Activated CD4-positive, alpha-beta T cell treated with anti-CD3 and anti-CD28 coated beads, Interleukin-2, amount 10 ng/mL, durations not matched to agents 7 days and 5 days (primary cell): ENCODE measurements at regions of chr4 and their contacts with region 1.

Region 1: GRCh38 chr4:153095448-153096204 is 108.6 kb upstream of the TRIM2 start:
- DNase-seq: no peak
- H3K4me3 Mint-ChIP-seq: no peak overlapping the region
- H3K27ac Mint-ChIP-seq: no peak overlapping the region
- H3K4me1 Mint-ChIP-seq: peaks cover 3% of the 10 kb centered on the region
- H3K27me3 Mint-ChIP-seq: peaks cover 10% of the 10 kb centered on the region

Region 2: GRCh38 chr4:152910521-152910920 is 185.1 kb before region 1 on chr4:
- CTCF ChIA-PET with region 1: no interaction called
- POLR2A ChIA-PET with region 1: no interaction called
- DNase-seq: no peak
- H3K4me3 Mint-ChIP-seq: no peak overlapping the region
- H3K27ac Mint-ChIP-seq: no peak overlapping the region
- H3K4me1 Mint-ChIP-seq: no peaks in the 10 kb centered on the region
- H3K27me3 Mint-ChIP-seq: no peaks in the 10 kb centered on the region

Region 3: GRCh38 chr4:153083447-153083947 is 12.1 kb before region 1 on chr4:
- CTCF ChIA-PET with region 1: interaction called, 39 read pairs
- POLR2A ChIA-PET with region 1: no interaction called
- DNase-seq: peak; percentile 62
- H3K4me3 Mint-ChIP-seq: no peak overlapping the region
- H3K27ac Mint-ChIP-seq: no peak overlapping the region
- H3K4me1 Mint-ChIP-seq: peaks cover 53% of the 10 kb centered on the region
- H3K27me3 Mint-ChIP-seq: peaks cover 14% of the 10 kb centered on the region

Region 4: GRCh38 chr4:153107246-153107645 is 11.6 kb after region 1 on chr4:
- CTCF ChIA-PET with region 1: interaction called, 10 read pairs
- POLR2A ChIA-PET with region 1: no interaction called
- DNase-seq: no peak
- H3K4me3 Mint-ChIP-seq: no peak overlapping the region
- H3K27ac Mint-ChIP-seq: no peak overlapping the region
- H3K4me1 Mint-ChIP-seq: peaks cover 11% of the 10 kb centered on the region
- H3K27me3 Mint-ChIP-seq: peaks cover 58% of the 10 kb centered on the region